PC-9 (cell line): ENCODE measurements at regions of chr10 and their contacts with region 1.

Region 1: DNA sequence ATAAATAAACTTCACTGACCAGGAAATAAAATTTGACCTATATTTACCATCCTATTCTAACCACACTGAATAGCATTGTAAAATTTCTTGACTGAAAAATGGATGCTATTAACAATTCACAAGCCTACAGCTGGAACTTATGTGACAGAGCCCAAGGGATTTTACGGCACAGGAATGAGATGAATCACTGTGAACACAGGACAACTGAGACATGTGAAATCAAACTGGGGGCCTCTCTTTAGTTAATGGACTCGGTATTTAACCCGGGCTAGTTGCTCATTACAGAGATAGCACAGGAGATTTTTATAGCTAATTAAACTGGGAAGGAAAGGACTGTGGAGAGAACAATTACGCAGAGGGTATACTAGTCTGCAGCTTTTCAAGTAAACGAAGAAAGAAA is 100.6 kb downstream of the MICU1 start:
- DNase-seq: no peak
- H3K4me3 ChIP-seq: no peak overlapping the region
- H3K27ac ChIP-seq: no peak overlapping the region
- H3K4me1 ChIP-seq: no peaks in the 10 kb centered on the region
- H3K27me3 ChIP-seq: no peaks in the 10 kb centered on the region
- CTCF ChIP-seq: no peak

Region 2: GRCh38 chr10:72407927-72408600 is 117.2 kb before region 1 on chr10:
- CTCF ChIA-PET with region 1: no interaction called
- POLR2A ChIA-PET with region 1: no interaction called
- intact Hi-C with region 1: loop called (anchors 10 kb)
- DNase-seq: no peak
- H3K4me3 ChIP-seq: no peak overlapping the region
- H3K27ac ChIP-seq: no peak overlapping the region
- H3K4me1 ChIP-seq: no peaks in the 10 kb centered on the region
- H3K27me3 ChIP-seq: no peaks in the 10 kb centered on the region
- CTCF ChIP-seq: no peak